HEK293 (cell line): ENCODE measurements at regions of chr22 and their contacts with region 1.

Region 1: DNA sequence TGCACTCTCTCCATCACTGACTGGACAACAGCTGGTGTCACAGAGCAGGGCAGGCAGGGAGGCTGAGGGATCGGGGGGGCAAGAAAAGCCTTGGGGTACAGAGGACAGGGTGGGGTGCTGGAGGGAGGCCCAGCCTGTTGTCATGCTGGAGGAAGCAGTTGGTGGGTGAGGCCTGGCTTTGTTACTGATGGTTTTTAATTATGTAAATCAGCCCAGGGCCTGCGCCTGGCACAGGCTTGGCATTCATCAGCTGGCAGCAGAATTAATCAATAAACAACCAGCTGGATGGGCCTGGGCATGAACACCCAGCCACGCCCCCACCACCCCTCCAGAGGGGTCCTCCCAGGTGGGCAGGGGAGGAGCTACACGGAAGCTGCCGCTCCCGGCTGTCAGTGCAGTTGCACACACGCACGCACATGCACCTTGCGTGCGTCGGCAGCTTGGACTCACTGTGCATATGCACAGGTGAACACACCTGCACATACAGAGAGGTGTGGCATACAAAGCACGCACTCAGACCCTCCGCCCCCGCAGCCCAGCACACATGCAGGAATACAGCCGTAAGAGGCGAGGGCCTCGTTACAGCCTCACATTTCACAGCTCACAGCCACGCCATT is 21.3 kb upstream of the ELFN2 start:
- H3K4me3 ChIP-seq: no peak overlapping the region
- H3K27ac ChIP-seq: no peak overlapping the region
- H3K4me1 ChIP-seq: no peaks in the 10 kb centered on the region
- CTCF ChIP-seq: no peak

Region 2: GRCh38 chr22:37428649-37429586 is 19.7 kb before region 1 on chr22:
- CTCF ChIA-PET with region 1: interaction called, 10 read pairs
- POLR2A ChIA-PET with region 1: no interaction called
- H3K4me3 ChIP-seq: no peak overlapping the region
- H3K27ac ChIP-seq: no peak overlapping the region
- H3K4me1 ChIP-seq: no peaks in the 10 kb centered on the region
- CTCF ChIP-seq: peak; percentile 63